Left colon (tissue), 2 donors: ENCODE measurements at regions of chr5 and their contacts with region 1.

Region 1: GRCh38 chr5:135034236-135034962 is 371 bp upstream of the PITX1 start:
- DNase-seq: peak; percentile 51 to 71
- ATAC-seq: peak; percentile 65

Region 2: DNA sequence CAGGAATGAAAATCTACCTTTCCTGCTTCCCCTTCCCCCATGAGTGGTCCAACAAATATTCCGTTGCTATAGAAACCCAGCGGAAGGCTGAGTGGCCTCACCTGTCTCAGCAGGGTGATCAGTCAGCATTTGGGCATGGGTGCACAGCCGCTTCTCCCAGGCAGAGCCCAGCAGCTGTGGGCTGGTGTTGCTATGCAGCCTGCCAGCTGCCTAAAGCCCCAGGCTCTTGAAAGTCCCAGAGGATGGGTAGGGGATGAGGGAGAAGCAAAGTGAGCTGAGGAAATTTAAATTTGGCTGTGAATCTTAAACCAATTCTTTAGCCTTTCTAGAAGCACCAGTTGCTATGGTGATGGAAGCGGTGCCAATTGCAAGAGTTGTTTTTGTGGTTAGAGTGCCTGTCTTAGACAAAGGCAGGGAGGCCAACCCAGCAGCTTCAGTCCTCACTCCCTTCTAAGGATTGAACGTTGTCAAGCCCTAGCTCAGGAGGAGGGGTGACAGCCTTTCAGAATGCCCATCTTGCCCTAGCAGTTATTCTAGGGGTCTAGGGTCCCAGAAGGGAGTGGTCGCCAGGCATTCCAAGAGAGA is 151.2 kb after region 1 on chr5:
- intact Hi-C with region 1: loop called (anchors 5 kb)
- DNase-seq: peak in 1 of 2 donors; percentile 28
- ATAC-seq: no peak

Region 3: DNA sequence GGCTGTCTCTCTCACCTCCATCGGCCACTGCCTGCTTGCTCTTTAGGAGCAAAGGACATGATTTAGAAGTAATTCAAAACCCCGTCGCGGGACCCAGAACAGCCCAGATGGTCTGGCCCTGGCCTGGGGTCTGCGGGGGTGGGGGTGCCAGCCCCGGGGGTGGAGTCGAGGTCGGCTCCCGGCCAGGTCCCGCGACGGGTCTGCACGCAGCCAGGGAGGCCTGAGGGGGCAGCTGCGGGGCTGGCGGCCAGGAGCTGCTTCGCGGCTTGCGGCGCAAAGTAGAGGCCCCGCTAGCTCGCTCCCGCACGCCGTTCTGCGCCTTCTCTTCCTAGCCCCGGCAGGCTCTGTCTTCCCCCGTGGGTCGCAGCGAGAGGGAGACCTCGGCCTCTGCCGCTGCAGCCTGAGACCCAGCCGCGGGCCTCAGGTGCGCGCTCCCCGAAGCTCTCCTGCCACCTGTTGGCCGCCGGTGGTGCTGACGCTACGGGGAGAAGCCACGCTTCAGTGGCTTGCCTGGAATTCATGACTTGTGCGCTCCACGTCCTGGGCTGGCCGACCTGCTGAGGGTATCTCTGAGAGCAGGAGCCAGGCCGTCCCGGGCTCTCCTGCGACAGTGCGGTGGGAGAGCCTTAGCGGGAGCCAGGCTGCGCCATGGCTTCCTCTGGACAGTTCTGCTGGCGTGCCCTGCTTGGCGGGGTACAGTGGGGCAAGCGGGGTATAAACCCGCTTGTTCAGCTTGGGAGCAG is 156.9 kb after region 1 on chr5:
- intact Hi-C with region 1: loop called (anchors 5 kb)
- DNase-seq: peak; percentile 59 to 82
- ATAC-seq: peak; percentile 99